ENCODE measurements at regions of chrX and their contacts with region 1.

Region 1: GRCh38 chrX:40169193-40170101 is 71.7 kb upstream of the BCOR start:
- DNase-seq: peak; percentile 71 to 80
- H3K4me3 ChIP-seq: no peak overlapping the region
- H3K27ac ChIP-seq: peak overlapping the region; percentile 41 to 71 (median 60)
- H3K4me1 ChIP-seq: peaks cover 14 to 43% of the 10 kb centered on the region in 2 donors
- H3K27me3 ChIP-seq: no peaks in the 10 kb centered on the region
- CTCF ChIP-seq: peak in 4 of 6 experiments; percentile 9 to 41 (median 37)
- POLR2A ChIP-seq: no peak

Region 2: GRCh38 chrX:39730662-39731397 is 438.6 kb before region 1 on chrX:
- intact Hi-C with region 1: loop called (anchors 10 kb)
- DNase-seq: peak; percentile 52 to 64
- H3K4me3 ChIP-seq: no peak overlapping the region
- H3K27ac ChIP-seq: no peak overlapping the region
- H3K4me1 ChIP-seq: peaks cover 9 to 22% of the 10 kb centered on the region in 2 donors
- H3K27me3 ChIP-seq: no peaks in the 10 kb centered on the region
- CTCF ChIP-seq: peak in 4 of 6 experiments; percentile 34 to 54 (median 48)
- POLR2A ChIP-seq: no peak

Region 3: DNA sequence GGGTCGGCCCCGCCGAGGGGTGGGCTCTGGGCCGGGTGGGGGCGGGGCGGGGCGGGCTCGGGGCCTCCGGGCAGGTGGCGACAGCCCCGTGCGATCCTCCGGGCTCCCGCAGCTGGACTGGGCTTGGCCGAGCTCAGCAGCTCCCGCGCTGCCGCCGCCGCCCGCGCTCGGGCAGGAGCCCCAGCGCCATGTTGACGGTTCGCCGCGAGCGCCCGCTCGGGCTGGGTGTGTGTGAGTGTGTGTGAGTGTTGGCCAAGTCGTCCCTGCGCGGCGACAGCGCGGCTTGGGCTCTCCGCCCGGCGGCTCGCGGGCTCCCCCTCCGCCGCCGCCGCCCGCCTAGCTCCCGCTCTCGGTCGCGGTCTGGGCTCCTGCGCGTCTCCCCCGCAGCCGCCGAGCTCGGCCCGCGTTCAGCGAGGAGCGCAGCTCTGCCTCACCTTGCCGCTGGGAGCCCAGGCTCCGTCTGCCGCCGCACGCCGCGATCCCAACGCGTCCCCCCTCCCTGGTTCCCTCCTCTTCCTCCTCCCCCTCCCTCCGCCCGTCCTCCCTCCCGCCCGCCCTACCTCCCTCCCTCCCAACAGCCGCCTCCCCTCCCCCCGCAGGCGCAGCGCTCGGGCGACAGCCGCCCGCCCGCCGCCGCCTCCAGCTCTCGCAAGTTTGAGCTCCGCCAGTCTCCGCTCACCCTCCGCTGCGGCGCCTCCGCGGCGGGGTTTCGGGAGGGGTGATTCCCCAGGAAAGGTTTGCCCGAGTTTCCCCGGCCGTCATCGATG is 71.8 kb before region 1 on chrX and contains the start of gene BCOR:
- intact Hi-C with region 1: no loop called
- DNase-seq: peak; percentile 72 to 78
- H3K4me3 ChIP-seq: peak within 1 kb of the TSS in 2 of 3 donors; percentile 39 to 54
- H3K27ac ChIP-seq: peak within 1 kb of the TSS; percentile 67 to 80 (median 75)
- H3K4me1 ChIP-seq: peaks cover 8 to 19% of the 10 kb centered on the region in 2 donors
- H3K27me3 ChIP-seq: peaks cover 6% of the 10 kb centered on the region
- CTCF ChIP-seq: no peak
- POLR2A ChIP-seq: peak; percentile 67 to 78
- total RNA-seq, gene BCOR: 30.9 to 67.4 (median 42.4) TPM

Region 4: GRCh38 chrX:40108959-40109287 is 60.5 kb before region 1 on chrX:
- intact Hi-C with region 1: loop called (anchors 5 kb)
- DNase-seq: peak; percentile 76 to 77
- H3K4me3 ChIP-seq: peak overlapping the region in 1 of 3 donors; percentile 51
- H3K27ac ChIP-seq: peak overlapping the region; percentile 78 to 93 (median 93)
- H3K4me1 ChIP-seq: peaks cover 20 to 55% of the 10 kb centered on the region in 2 donors
- H3K27me3 ChIP-seq: no peaks in the 10 kb centered on the region
- CTCF ChIP-seq: no peak
- POLR2A ChIP-seq: peak in 1 of 2 donors; percentile 37

Region 5: GRCh38 chrX:40266490-40267333 is 97.3 kb after region 1 on chrX:
- intact Hi-C with region 1: loop called (anchors 10 kb)
- DNase-seq: peak; percentile 61 to 68
- H3K4me3 ChIP-seq: peak overlapping the region in 1 of 3 donors; percentile 19
- H3K27ac ChIP-seq: peak overlapping the region in 2 of 3 donors; percentile 4 to 41
- H3K4me1 ChIP-seq: peaks cover 0 to 10% of the 10 kb centered on the region in 2 donors
- H3K27me3 ChIP-seq: no peaks in the 10 kb centered on the region
- CTCF ChIP-seq: peak; percentile 29 to 72 (median 57)
- POLR2A ChIP-seq: no peak

Region 6: GRCh38 chrX:40479777-40480318 is 310.4 kb after region 1 on chrX:
- intact Hi-C with region 1: no loop called
- DNase-seq: no peak
- H3K4me3 ChIP-seq: no peak overlapping the region
- H3K27ac ChIP-seq: no peak overlapping the region
- H3K4me1 ChIP-seq: peaks cover 0 to under 1% of the 10 kb centered on the region in 2 donors
- H3K27me3 ChIP-seq: no peaks in the 10 kb centered on the region
- CTCF ChIP-seq: no peak
- POLR2A ChIP-seq: no peak